ENCODE measurements at regions of chr11 and their contacts with region 1.

Region 1: DNA sequence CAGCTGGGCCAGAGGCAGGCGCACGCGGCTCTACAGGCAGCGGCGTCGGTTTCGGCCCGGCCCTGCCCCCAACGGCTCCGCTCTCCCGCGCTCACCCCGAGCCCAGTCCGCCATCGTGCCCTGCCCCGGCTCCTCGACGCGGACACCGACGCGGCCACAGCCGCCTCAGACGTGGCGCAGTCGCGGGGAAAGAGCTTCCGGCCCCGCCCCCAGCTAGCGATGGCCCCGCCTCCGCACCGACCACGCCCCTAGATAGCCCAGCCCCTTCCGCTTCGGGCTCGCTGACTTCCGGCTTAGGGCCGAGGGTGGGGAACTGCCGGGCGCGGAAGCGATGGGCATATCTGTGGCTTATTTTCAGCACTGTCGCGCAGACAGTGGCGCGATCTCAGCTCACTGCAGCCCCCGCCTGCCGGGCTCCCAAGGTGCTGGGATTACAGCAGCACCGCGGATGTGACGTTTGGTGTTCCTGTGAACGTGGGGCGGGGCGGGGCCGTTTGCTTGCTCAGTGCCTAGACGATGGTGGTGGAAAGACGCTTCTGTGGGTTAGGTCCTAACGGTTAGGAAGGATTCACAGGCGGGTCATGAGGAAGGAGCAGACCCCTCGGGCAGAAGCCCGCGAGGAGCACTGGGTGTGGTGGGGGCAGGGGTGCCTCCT is at the starts of genes BET1L and RIC8A:
- DNase-seq: peak; percentile 99
- H3K4me3 ChIP-seq: peak within 1 kb of the TSS; percentile 98
- H3K27ac ChIP-seq: peak within 1 kb of the TSS; percentile 97
- H3K4me1 ChIP-seq: peaks cover 26% of the 10 kb centered on the region
- CTCF ChIP-seq: no peak
- total RNA-seq, gene BET1L: 12.3 and 16.2 TPM in 2 replicates
- total RNA-seq, gene RIC8A: 125 and 136 TPM in 2 replicates

Region 2: DNA sequence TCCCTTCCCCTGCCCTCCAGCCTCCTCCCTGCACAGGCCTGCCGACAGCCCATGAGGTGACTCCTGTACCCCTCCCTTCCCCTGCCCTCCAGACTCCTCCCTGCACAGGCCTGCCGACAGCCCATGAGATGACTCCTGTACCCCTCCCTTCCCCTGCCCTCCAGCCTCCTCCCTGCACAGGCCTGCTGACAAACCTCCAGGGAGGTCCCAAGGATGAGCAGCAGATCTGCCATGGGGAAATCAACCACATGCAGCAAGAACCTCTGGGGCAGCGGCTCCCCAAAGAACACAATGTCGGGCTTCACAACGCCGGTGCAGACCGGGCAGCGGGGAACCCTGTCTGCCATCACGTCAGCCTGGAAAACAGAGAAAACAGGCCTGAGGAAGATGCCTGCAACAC is 16.5 kb after region 1 on chr11:
- CTCF ChIA-PET with region 1: no interaction called
- POLR2A ChIA-PET with region 1: interaction called, 3 read pairs
- intact Hi-C with region 1: loop called (anchors 1 kb)
- DNase-seq: no peak
- H3K4me3 ChIP-seq: no peak overlapping the region
- H3K27ac ChIP-seq: no peak overlapping the region
- H3K4me1 ChIP-seq: no peaks in the 10 kb centered on the region
- CTCF ChIP-seq: no peak

Region 3: DNA sequence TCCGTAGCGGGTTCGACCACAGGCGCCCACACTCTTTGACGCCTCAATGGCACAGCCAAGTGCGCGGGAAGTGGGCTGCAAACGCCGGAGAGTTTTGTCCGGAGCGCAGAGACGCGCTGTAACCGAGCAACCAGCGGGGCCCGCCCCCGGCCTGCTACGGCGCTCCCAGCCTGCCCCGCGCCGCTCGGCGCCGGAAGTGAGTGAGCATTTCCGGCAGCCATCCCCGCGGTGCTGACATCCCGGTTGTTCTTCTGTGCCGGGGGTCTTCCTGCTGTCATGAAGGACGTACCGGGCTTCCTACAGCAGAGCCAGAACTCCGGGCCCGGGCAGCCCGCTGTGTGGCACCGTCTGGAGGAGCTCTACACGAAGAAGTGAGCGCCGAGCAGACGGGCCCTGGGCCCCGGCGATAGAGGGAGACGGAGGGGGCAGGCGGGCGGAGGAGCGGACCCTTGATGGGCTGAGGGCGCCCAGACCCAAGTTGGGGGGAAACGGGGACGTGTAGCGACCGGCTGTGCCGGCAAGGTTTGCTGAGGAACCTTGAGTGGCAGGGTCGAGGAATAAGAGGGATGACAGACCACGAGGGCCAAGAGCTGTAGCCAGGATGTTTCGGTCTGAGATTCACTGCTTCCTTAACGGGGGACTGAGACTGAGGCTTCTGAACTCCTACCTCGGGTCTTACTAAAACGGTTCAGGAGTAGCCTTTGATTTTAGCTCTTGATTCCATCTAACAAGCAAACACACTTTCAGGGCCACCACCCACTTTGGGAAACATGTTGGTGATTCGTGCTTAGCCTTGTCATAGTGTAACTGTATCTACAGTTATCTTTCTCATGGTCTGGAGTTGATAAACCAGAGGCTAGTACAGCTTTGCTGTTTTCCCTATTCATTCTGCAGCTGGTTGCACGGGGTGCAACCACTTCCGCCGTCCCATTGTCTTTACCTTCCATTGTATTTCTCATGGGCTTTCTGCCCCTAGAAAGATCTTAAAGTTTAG is 29.7 kb after region 1 on chr11 and contains the start of gene PSMD13:
- CTCF ChIA-PET with region 1: no interaction called
- POLR2A ChIA-PET with region 1: interaction called, 8 read pairs
- intact Hi-C with region 1: loop called (anchors 1 kb)
- DNase-seq: peak; percentile 89
- H3K4me3 ChIP-seq: peak within 1 kb of the TSS; percentile 99
- H3K27ac ChIP-seq: peak within 1 kb of the TSS; percentile 89
- H3K4me1 ChIP-seq: peaks cover 19% of the 10 kb centered on the region
- CTCF ChIP-seq: no peak
- total RNA-seq, gene PSMD13: 146 and 156 TPM in 2 replicates

Region 4: GRCh38 chr11:269146-269890 is 62.0 kb after region 1 on chr11:
- CTCF ChIA-PET with region 1: no interaction called
- POLR2A ChIA-PET with region 1: interaction called, 6 read pairs
- intact Hi-C with region 1: loop called (anchors 1 kb)
- DNase-seq: peak; percentile 99
- H3K4me3 ChIP-seq: peak overlapping the region; percentile 62
- H3K27ac ChIP-seq: peak overlapping the region; percentile 92
- H3K4me1 ChIP-seq: peaks cover 31% of the 10 kb centered on the region
- CTCF ChIP-seq: no peak

Region 5: DNA sequence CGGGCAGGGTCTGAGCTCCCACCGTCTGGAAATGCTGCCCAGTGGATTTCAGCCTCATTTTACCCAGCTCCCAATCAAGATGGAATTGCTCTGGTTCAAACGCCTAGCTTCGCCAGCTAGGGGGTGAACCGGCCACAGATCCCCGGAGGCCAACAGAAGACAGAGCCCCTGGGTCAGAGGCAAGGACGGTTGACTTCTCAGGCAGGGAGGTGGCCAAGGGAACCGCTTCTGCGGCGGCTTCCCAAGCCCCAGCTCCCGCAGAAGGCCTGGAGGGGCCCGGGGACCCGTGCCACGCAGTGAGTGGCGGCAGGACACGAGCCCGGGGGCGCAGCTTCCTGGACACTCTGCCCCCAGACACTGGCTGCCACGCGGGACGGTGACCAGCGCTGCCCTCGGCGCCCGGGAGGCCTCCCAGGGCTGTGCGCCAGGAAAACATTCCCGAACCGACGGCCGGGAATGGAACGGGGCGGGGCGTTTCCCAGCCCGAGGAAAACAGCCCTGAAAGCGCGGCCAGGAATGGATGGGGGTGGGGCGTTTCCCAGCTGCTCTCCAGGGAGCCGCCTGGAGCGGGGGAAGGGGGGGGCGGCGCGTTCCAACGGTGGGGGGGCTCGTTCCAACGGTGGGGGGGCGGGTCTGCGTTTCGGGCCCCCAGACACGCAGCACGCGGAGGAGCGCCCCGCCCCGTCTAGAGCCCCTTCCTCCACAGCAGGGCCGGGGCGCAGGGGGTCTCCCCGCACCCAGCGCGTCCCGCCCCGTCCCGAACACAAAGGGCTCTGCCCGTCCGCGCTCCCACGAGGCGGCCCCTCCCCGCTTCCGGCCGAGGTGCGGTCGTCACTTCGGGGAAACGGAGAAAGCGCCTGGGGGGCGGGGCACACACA is 148.5 kb after region 1 on chr11:
- CTCF ChIA-PET with region 1: no interaction called
- POLR2A ChIA-PET with region 1: no interaction called
- intact Hi-C with region 1: loop called (anchors 5 kb)
- DNase-seq: peak; percentile 81
- H3K4me3 ChIP-seq: peak overlapping the region; percentile 55
- H3K27ac ChIP-seq: peak overlapping the region; percentile 73
- H3K4me1 ChIP-seq: peaks cover 41% of the 10 kb centered on the region
- CTCF ChIP-seq: no peak

Region 6: GRCh38 chr11:506238-506994 is 299.1 kb after region 1 on chr11:
- CTCF ChIA-PET with region 1: no interaction called
- POLR2A ChIA-PET with region 1: interaction called, 3 read pairs
- intact Hi-C with region 1: loop called (anchors 5 kb)
- DNase-seq: peak; percentile 98
- H3K4me3 ChIP-seq: peak overlapping the region; percentile 95
- H3K27ac ChIP-seq: peak overlapping the region; percentile 85
- H3K4me1 ChIP-seq: peaks cover 32% of the 10 kb centered on the region
- CTCF ChIP-seq: no peak

Measured in OCI-LY7 (cell line).